ENCODE measurements at regions of chr22 and their contacts with region 1.

Region 1: DNA sequence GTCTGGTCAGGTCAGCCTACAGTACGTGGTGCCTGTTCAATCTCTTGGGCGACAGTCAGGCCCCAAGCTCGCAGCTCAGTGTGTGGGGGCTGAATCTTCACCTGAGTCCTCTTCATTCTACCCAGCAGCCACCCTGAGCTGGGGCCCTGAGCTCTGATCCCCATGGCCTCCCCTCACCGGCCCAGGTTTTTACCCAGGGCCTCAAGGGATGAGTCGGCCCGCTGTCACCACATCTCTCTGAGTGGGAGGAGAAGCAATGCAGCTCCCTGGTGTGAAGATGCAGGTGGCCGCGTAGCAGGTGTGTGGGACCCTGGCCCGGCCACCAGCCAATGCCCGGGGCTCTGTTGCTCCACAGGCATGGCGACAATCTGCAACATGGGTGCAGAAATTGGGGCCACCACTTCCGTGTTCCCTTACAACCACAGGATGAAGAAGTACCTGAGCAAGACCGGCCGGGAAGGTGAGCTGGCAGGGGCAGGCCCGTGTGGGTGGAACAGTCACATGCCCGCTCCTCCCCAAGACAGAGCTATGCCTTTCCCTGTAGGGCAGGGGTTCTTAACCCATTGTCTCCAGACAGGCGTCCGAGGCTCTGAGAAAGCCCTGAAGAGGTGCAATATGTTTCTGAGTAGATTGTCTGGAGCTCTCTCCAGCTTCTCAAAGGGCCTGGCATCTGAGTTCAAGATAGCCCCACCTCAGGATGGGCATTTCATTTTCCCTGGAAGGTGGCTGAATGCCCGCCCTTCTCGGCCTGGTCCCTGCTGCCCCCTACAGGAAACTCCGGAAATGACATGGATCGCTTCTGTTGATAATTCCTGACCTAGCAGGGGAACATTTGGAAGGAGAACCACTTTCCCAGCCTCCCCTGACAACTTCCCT is 26.9 kb downstream of the POLR3H start:
- DNase-seq: peak in 1 of 3 donors; percentile 76
- ATAC-seq: peak; percentile 72 to 83 (median 76)
- H3K4me3 ChIP-seq: no peak overlapping the region
- H3K27ac ChIP-seq: no peak overlapping the region
- H3K4me1 ChIP-seq: peaks cover 0 to 13% (median 3%) of the 10 kb centered on the region in 4 donors
- H3K27me3 ChIP-seq: no peaks in the 10 kb centered on the region
- CTCF ChIP-seq: peak; percentile 84 to 92 (median 85)
- POLR2A ChIP-seq: no peak

Region 2: DNA sequence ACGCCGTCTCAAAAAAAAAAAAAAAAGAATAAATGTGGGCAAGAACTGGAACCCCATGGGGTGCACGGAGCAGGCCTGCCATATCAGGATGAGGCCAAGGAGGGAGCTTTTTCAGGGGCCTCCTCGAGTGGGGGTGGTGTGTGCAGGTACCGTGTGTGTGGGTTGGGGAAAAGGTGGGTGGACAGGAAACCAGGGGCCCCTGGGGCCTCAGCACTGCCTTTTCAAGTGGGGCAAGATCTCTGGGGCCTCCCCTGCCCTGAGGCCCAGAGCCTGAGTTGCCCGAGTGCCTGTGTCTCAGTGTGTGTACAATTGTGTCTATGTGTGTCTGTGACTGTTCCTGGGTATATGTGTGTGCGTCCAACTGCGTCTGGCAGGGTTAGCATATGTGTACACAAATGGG is 111.8 kb before region 1 on chr22:
- intact Hi-C with region 1: loop called (anchors 5 kb)
- DNase-seq: no peak
- ATAC-seq: no peak
- H3K4me3 ChIP-seq: no peak overlapping the region
- H3K27ac ChIP-seq: no peak overlapping the region
- H3K4me1 ChIP-seq: peaks cover 0 to 36% (median 10%) of the 10 kb centered on the region in 4 donors
- H3K27me3 ChIP-seq: no peaks in the 10 kb centered on the region
- CTCF ChIP-seq: no peak
- POLR2A ChIP-seq: no peak

Region 3: GRCh38 chr22:41458161-41458728 is 59.2 kb before region 1 on chr22:
- intact Hi-C with region 1: loop called (anchors 10 kb)
- DNase-seq: no peak
- ATAC-seq: no peak
- H3K4me3 ChIP-seq: no peak overlapping the region
- H3K27ac ChIP-seq: no peak overlapping the region
- H3K4me1 ChIP-seq: no peaks in the 10 kb centered on the region
- H3K27me3 ChIP-seq: no peaks in the 10 kb centered on the region
- CTCF ChIP-seq: no peak
- POLR2A ChIP-seq: no peak

Region 4: GRCh38 chr22:41468381-41469217 is 48.8 kb before region 1 on chr22 and contains the starts of genes ACO2 and PHF5A:
- intact Hi-C with region 1: loop called in 1 of 2 experiments (anchors 10 kb)
- DNase-seq: peak; percentile 96 to 98 (median 98)
- ATAC-seq: peak; percentile 95 to 97 (median 96)
- H3K4me3 ChIP-seq: peak within 1 kb of the TSS; percentile 83 to 99 (median 92)
- H3K27ac ChIP-seq: peak within 1 kb of the TSS; percentile 81 to 97 (median 96)
- H3K4me1 ChIP-seq: peaks cover 0 to 41% (median 18%) of the 10 kb centered on the region in 4 donors
- H3K27me3 ChIP-seq: no peaks in the 10 kb centered on the region
- CTCF ChIP-seq: no peak
- POLR2A ChIP-seq: peak; percentile 61
- total RNA-seq, gene ACO2: 62.6 to 135 (median 66.8) TPM
- total RNA-seq, gene PHF5A: 12.1 to 20.7 (median 14.5) TPM